ENCODE measurements at regions of chr15 and their contacts with region 1.

Region 1: GRCh38 chr15:63553388-63553791 is 43.8 kb upstream of the FBXL22 start:
- DNase-seq: no peak
- CTCF ChIP-seq: no peak

Region 2: DNA sequence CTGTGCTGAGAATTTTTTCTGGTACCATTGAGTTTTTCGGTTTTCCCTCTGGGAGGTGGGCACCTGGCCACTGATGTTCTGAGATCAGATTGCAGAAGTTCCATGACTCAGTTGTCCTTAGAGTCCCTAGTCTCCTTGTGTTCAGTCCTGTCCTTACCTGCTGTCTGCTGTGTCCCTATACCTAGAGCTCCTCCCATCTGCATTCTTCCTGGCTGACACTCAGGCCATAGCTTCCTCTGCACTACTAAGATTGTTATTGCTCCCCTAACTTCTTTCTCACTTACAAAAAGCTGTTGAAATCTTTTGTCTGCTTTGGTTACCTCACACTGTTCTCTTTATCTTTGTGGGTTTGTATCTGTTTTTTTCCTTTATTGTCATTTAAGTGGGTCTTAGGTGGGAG is 35.8 kb before region 1 on chr15:
- CTCF ChIA-PET with region 1: no interaction called
- POLR2A ChIA-PET with region 1: no interaction called
- DNase-seq: no peak
- CTCF ChIP-seq: no peak

Region 3: DNA sequence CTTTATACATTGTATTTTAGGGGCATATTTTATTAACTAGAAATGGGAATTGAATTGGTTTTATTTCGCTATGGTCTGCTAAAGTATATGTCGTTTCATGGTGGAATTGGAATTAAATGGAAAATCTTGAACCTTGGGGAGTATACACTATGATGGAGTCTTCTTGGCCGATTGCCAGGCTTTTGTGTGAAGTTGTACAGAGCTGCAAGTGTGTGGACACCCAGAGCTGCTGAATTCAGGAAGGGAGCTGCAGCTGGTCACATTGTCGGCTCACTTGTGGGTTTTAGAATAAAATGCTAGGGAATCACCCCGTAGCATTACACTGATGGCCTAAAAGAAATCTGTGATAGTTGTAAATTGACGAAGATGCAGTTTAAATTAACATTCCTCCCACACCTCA is 13.9 kb before region 1 on chr15:
- CTCF ChIA-PET with region 1: interaction called, 11 read pairs
- POLR2A ChIA-PET with region 1: no interaction called
- DNase-seq: no peak
- CTCF ChIP-seq: no peak